ENCODE measurements at regions of chr17 and their contacts with region 1.

Region 1: GRCh38 chr17:38868817-38869525 is 887 bp upstream of the LASP1 start:
- DNase-seq: peak; percentile 87
- ATAC-seq: peak; percentile 59
- H3K4me3 ChIP-seq: peak overlapping the region; percentile 98
- H3K27ac ChIP-seq: 0 out of 2 replicates have a peak overlapping the region, but pooled peaks have one; percentile 11
- H3K4me1 ChIP-seq: peaks cover 23% of the 10 kb centered on the region
- H3K27me3 ChIP-seq: no peaks in the 10 kb centered on the region
- CTCF ChIP-seq: peak; percentile 47

Region 2: GRCh38 chr17:38841141-38841485 is 27.9 kb before region 1 on chr17:
- CTCF ChIA-PET with region 1: no interaction called
- POLR2A ChIA-PET with region 1: no interaction called
- intact Hi-C with region 1: no loop called
- DNase-seq: no peak
- ATAC-seq: no peak
- H3K4me3 ChIP-seq: no peak overlapping the region
- H3K27ac ChIP-seq: no peak overlapping the region
- H3K4me1 ChIP-seq: no peaks in the 10 kb centered on the region
- H3K27me3 ChIP-seq: no peaks in the 10 kb centered on the region
- CTCF ChIP-seq: no peak

Region 3: DNA sequence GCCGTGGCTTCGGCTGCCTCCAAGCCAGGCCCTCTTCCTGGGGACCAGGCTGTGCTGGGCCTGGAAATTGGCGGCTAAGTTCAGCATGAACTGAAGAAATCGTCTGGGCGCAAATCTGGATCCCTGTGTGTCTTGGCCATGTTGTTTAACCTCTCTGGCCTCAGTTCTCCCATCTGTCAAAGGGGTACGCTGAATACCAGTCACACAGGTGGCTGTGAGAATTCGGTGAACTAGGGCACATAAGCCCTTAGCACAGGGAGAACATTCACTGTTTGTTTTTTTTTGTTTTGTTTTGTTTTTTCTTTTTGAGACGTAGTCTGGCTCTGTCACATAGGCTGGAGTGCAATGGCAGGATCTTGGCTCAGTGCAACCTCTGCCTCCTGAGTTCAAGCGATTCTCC is 19.9 kb after region 1 on chr17:
- CTCF ChIA-PET with region 1: no interaction called
- POLR2A ChIA-PET with region 1: interaction called, 15 read pairs
- intact Hi-C with region 1: no loop called
- DNase-seq: no peak
- ATAC-seq: no peak
- H3K4me3 ChIP-seq: no peak overlapping the region
- H3K27ac ChIP-seq: no peak overlapping the region
- H3K4me1 ChIP-seq: no peaks in the 10 kb centered on the region
- H3K27me3 ChIP-seq: no peaks in the 10 kb centered on the region
- CTCF ChIP-seq: no peak

Region 4: DNA sequence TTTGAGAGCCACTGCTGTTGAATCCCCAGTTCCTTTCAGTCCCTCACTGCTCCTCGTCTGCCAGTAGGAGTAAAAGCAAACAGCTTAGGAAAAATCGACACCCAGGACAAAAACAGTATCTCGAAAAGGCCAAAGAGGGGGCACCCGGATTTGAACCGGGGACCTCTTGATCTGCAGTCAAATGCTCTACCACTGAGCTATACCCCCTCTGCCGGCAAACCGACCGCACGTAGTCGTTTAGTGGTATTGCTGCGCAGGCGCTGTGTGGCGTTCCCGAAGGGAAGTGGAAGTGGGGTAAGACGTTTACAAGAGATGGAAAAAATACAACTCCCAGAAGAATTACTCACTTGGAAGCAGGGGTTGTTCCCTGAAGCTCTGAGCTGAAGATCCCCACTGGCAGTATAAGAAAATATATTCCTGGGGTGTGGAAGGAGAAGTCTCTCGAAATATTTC is 284.7 kb after region 1 on chr17:
- CTCF ChIA-PET with region 1: interaction called, 3 read pairs
- POLR2A ChIA-PET with region 1: interaction called, 13 read pairs
- intact Hi-C with region 1: no loop called
- DNase-seq: peak; percentile 87
- ATAC-seq: peak; percentile 46
- H3K4me3 ChIP-seq: peak overlapping the region; percentile 90
- H3K27ac ChIP-seq: 0 out of 2 replicates have a peak overlapping the region, but pooled peaks have one; percentile 16
- H3K4me1 ChIP-seq: peaks cover 7% of the 10 kb centered on the region
- H3K27me3 ChIP-seq: peaks cover 6% of the 10 kb centered on the region; the same call in 1 of the 2 replicates
- CTCF ChIP-seq: no peak

Region 5: DNA sequence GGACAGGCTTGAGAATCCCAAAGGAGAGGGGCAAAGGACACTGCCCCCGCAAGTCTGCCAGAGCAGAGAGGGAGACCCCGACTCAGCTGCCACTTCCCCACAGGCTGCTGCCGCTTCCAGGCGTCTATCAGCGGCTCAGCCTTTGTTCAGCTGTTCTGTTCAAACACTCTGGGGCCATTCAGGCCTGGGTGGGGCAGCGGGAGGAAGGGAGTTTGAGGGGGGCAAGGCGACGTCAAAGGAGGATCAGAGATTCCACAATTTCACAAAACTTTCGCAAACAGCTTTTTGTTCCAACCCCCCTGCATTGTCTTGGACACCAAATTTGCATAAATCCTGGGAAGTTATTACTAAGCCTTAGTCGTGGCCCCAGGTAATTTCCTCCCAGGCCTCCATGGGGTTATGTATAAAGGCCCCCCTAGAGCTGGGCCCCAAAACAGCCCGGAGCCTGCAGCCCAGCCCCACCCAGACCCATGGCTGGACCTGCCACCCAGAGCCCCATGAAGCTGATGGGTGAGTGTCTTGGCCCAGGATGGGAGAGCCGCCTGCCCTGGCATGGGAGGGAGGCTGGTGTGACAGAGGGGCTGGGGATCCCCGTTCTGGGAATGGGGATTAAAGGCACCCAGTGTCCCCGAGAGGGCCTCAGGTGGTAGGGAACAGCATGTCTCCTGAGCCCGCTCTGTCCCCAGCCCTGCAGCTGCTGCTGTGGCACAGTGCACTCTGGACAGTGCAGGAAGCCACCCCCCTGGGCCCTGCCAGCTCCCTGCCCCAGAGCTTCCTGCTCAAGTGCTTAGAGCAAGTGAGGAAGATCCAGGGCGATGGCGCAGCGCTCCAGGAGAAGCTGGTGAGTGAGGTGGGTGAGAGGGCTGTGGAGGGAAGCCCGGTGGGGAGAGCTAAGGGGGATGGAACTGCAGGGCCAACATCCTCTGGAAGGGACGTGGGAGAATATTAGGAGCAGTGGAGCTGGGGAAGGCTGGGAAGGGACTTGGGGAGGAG is 1146.3 kb after region 1 on chr17 and contains the start of gene CSF3:
- CTCF ChIA-PET with region 1: no interaction called
- POLR2A ChIA-PET with region 1: interaction called, 20 read pairs
- intact Hi-C with region 1: no loop called
- DNase-seq: no peak
- ATAC-seq: peak; percentile 18
- H3K4me3 ChIP-seq: no peak within 1 kb of the TSS
- H3K27ac ChIP-seq: peak within 1 kb of the TSS; percentile 11; the same call in 1 of the 2 replicates
- H3K4me1 ChIP-seq: peaks cover 30% of the 10 kb centered on the region
- H3K27me3 ChIP-seq: no peaks in the 10 kb centered on the region
- CTCF ChIP-seq: no peak
- total RNA-seq, gene CSF3: 4.0 and 4.3 TPM in 2 replicates

Measured in PC-3 (cell line).